ENCODE measurements at regions of chr1 and their contacts with region 1.

Region 1: GRCh38 chr1:51392241-51392640 is 61.9 kb upstream of the TTC39A start:
- DNase-seq: no peak
- ATAC-seq: no peak
- H3K4me3 ChIP-seq: no peak overlapping the region
- H3K27ac ChIP-seq: no peak overlapping the region
- H3K4me1 ChIP-seq: no peaks in the 10 kb centered on the region
- H3K27me3 ChIP-seq: no peaks in the 10 kb centered on the region
- CTCF ChIP-seq: no peak

Region 2: GRCh38 chr1:51819810-51820209 is 427.6 kb after region 1 on chr1:
- intact Hi-C with region 1: loop called in 1 of 10 experiments (anchors 5 kb)
- DNase-seq: no peak
- ATAC-seq: no peak
- H3K4me3 ChIP-seq: no peak overlapping the region
- H3K27ac ChIP-seq: no peak overlapping the region
- H3K4me1 ChIP-seq: no peaks in the 10 kb centered on the region
- H3K27me3 ChIP-seq: no peaks in the 10 kb centered on the region
- CTCF ChIP-seq: no peak

Measured in heart right ventricle (tissue), 16 donors.